Activated CD8-positive, alpha-beta T cell treated with anti-CD3 and anti-CD28 coated beads for 36 hours (primary cell): ENCODE measurements at regions of chr11 and their contacts with region 1.

Region 1: DNA sequence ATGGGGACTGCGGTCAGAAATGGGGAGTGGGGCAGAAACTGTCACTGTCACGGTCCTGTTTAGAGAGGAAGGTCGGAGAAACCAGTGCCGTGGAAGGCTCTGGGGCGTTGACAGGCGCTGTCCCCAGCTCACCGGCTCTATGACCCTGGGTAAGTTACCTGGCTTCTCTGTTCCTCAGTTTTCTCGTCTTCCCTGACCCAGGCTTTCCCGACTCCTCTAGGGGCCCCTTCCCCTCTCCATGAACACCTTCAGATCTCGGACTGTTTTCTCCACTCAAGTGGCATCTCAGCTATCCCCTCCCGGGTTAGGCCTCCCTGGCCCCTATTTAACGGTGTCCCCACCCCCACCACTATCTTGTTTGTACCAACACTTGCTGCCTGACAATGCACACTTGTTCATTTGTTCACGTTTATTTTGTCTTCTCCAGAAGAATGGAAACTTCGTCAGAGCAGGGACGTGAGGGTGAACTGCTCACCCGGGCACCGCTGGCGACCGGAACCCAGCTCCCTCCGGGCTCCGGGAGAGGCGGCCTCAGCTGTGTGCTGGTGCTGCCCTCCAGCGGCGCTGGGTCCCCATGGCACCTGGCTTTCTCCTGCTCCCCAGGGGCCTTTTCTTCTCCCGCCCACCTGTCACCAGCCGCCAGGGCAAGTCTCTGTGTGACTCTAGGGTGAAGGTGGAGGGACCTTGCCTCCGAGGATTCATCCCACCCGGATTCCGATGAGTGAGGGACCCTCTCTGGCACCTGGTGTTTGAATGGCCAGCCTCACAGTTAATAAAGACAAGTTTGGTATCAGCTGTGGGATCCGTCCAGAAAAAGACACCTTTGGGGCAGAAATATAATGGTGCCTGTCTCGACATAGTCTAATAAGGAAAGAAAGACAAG is 33.1 kb upstream of the SLC35C1 start:
- DNase-seq: peak; percentile 92
- ATAC-seq: peak; percentile 94
- H3K4me3 Mint-ChIP-seq: peak overlapping the region; percentile 76
- H3K27ac Mint-ChIP-seq: peak overlapping the region; percentile 62
- H3K4me1 Mint-ChIP-seq: peaks cover 12% of the 10 kb centered on the region
- H3K27me3 Mint-ChIP-seq: peaks cover 2% of the 10 kb centered on the region
- CTCF ChIP-seq: peak; percentile 70

Region 2: DNA sequence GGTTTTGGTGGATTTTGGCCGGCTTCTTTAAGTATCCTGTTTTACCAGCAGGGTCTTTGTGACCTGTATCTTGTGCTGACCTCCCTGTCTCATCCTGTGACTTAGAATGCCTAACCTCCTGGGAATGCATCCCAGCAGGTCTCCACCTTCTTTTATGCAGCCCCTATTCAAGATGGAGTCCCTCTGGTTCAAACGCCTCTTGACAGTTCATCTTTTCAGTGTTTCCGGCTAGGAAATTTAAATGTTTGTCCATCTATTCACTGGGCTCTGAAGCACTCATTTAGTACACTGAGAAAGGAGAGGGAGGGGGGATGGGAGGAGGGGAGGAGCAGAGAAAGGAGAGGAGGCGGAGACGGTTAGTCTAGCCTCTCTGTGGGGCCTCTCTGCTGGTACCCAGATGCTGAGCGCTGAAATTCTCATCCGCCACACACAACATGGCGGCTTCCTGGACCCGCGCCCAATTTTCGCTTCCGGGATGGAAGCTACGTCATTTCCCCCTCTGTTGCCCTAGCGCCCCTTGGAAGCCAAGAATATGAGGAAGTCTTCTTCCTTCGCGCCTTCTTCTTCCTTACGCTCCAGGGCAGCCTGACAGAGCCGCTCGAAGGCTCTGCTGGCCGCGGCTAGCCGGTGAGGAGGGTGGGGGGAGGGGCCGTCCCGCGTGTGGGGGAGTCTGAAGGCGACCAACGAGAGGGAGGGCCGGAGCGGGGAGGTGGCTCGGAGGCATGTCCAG is 416.7 kb before region 1 on chr11:
- CTCF ChIA-PET with region 1: interaction called, 12 read pairs
- POLR2A ChIA-PET with region 1: no interaction called
- intact Hi-C with region 1: no loop called
- DNase-seq: peak; percentile 91
- ATAC-seq: peak; percentile 96
- H3K4me3 Mint-ChIP-seq: peak overlapping the region; percentile 76
- H3K27ac Mint-ChIP-seq: peak overlapping the region; percentile 79
- H3K4me1 Mint-ChIP-seq: peaks cover 15% of the 10 kb centered on the region
- H3K27me3 Mint-ChIP-seq: no peaks in the 10 kb centered on the region
- CTCF ChIP-seq: no peak

Region 3: DNA sequence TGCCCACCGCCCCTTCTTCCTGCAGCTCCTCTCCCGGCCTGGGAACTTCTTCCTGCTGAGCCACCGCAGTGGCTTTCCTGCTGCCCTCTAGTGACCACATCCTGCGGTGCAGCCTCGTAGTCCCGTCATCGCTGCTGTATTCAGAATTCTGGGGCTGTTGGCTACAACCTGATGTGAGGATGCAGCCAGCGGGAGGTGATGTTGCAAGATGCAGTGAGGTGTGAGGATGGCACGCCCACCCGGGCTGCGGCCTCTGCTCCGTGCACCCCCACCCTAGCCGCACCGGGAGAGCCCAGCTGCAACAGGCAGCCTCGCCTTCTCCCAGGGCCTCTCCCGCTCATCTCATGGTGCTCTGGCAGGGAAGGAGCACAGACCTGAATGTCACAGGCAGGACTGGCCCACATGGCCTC is 116.5 kb before region 1 on chr11:
- CTCF ChIA-PET with region 1: interaction called, 65 read pairs
- POLR2A ChIA-PET with region 1: no interaction called
- intact Hi-C with region 1: loop called (anchors 10 kb)
- DNase-seq: peak; percentile 74
- ATAC-seq: peak; percentile 79
- H3K4me3 Mint-ChIP-seq: no peak overlapping the region
- H3K27ac Mint-ChIP-seq: no peak overlapping the region
- H3K4me1 Mint-ChIP-seq: peaks cover 3% of the 10 kb centered on the region
- H3K27me3 Mint-ChIP-seq: peaks cover 20% of the 10 kb centered on the region
- CTCF ChIP-seq: peak; percentile 93

Region 4: DNA sequence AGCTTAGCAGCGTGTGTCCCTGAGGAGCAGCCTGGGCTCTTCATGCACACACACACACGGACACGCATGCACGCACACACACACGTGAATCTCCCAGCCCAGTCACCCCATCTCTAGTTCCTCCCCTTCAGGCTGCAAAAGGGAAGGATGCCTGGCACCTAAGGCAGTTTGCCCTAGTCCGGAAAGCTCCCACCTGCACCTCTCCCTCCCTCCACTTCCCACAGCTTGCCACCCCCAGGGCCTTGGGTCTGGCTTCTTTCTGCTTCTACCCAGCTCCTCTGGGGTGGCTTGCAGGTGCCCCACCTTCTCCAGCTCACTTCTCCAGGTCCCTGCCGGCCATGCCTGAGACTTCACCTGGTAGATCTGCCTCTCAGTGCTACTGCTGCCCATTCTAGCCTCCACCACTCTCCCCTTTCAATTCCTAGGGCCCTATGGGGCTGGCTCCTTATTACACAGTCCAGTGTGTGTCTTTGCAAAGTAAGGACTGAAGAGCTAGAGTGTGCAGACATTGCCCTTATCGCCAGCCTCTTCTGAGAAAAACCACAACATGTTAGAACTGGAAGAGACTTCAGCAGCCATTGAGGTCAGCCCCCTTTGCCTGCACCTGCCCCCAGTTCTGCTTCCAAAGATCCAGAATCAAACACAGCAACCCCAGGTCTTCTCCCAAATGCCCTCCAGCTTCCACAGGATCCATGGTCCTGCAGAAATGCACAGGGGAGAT is 72.9 kb before region 1 on chr11:
- CTCF ChIA-PET with region 1: interaction called, 15 read pairs
- POLR2A ChIA-PET with region 1: no interaction called
- intact Hi-C with region 1: no loop called
- DNase-seq: no peak
- ATAC-seq: no peak
- H3K4me3 Mint-ChIP-seq: no peak overlapping the region
- H3K27ac Mint-ChIP-seq: no peak overlapping the region
- H3K4me1 Mint-ChIP-seq: no peaks in the 10 kb centered on the region
- H3K27me3 Mint-ChIP-seq: peaks cover 7% of the 10 kb centered on the region
- CTCF ChIP-seq: no peak

Region 5: GRCh38 chr11:45754261-45754709 is 17.5 kb before region 1 on chr11:
- CTCF ChIA-PET with region 1: interaction called, 22 read pairs
- POLR2A ChIA-PET with region 1: no interaction called
- intact Hi-C with region 1: no loop called
- DNase-seq: no peak
- ATAC-seq: no peak
- H3K4me3 Mint-ChIP-seq: no peak overlapping the region
- H3K27ac Mint-ChIP-seq: no peak overlapping the region
- H3K4me1 Mint-ChIP-seq: no peaks in the 10 kb centered on the region
- H3K27me3 Mint-ChIP-seq: peaks cover 13% of the 10 kb centered on the region
- CTCF ChIP-seq: no peak

Region 6: DNA sequence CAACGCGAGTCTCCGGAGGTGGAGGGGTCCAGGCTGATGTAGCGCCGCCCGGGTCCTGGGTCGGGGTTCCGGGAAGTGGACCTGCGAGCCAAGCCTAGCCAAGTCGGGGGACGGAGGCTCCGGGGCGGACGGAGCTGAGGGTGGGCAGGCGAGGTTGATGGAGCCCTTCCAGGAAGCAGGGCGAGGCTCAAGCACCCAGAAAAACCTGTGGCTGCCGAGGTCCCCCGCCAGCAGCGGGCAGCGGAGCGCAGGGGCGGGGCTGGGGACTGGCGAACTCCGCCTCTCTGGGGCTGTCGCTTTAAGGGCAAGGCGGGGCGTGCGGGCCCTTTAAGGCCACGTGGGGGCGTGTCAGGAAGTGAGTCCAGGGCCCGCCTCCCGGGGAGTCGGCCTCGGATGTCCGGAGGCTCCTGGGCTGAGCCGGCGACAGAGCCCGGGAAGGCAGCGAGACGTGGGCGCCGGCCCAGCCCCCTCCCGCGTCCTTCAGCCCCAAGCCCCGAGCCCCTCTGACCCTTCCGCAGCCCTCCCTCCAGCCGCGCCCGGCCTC is 33.0 kb after region 1 on chr11 and contains the start of gene SLC35C1:
- CTCF ChIA-PET with region 1: interaction called, 22 read pairs
- POLR2A ChIA-PET with region 1: interaction called, 3 read pairs
- intact Hi-C with region 1: no loop called
- DNase-seq: peak; percentile 98
- ATAC-seq: peak; percentile 98
- H3K4me3 Mint-ChIP-seq: peak within 1 kb of the TSS; percentile 91
- H3K27ac Mint-ChIP-seq: peak within 1 kb of the TSS; percentile 88
- H3K4me1 Mint-ChIP-seq: peaks cover 38% of the 10 kb centered on the region
- H3K27me3 Mint-ChIP-seq: no peaks in the 10 kb centered on the region
- CTCF ChIP-seq: no peak
- total RNA-seq, gene SLC35C1: 9.3 to 9.4 TPM

Region 7: GRCh38 chr11:45930031-45930794 is 158.4 kb after region 1 on chr11:
- CTCF ChIA-PET with region 1: no interaction called
- POLR2A ChIA-PET with region 1: no interaction called
- intact Hi-C with region 1: no loop called
- DNase-seq: peak; percentile 52
- ATAC-seq: peak; percentile 74
- H3K4me3 Mint-ChIP-seq: no peak overlapping the region
- H3K27ac Mint-ChIP-seq: peak overlapping the region; percentile 51
- H3K4me1 Mint-ChIP-seq: peaks cover 26% of the 10 kb centered on the region
- H3K27me3 Mint-ChIP-seq: no peaks in the 10 kb centered on the region
- CTCF ChIP-seq: no peak